ENCODE measurements at regions of chr2 and their contacts with region 1.

Region 1: DNA sequence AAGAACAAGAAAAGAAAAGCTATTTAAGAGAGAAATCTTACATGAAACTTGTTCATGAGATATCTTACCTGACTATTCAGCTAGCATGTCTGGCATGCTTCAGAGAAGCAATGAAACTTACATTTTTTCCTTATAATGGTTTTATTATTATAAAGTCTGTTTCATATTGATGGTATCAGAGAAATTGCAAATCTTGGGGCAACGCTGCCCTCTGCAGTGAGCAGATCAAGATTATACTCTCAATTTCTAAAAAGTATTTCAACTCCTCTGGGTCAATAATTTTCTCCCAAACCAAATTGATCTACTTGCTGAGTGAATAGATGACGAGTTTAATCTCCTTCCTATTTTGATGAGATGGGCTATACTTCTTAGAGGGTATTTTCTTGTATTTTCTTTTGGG is 235.6 kb downstream of the NUP35 start:
- DNase-seq: no peak
- H3K4me3 ChIP-seq: no peak overlapping the region
- H3K27ac ChIP-seq: no peak overlapping the region
- H3K4me1 ChIP-seq: no peaks in the 10 kb centered on the region
- H3K27me3 ChIP-seq: no peaks in the 10 kb centered on the region
- CTCF ChIP-seq: peak; percentile 13 to 45

Region 2: DNA sequence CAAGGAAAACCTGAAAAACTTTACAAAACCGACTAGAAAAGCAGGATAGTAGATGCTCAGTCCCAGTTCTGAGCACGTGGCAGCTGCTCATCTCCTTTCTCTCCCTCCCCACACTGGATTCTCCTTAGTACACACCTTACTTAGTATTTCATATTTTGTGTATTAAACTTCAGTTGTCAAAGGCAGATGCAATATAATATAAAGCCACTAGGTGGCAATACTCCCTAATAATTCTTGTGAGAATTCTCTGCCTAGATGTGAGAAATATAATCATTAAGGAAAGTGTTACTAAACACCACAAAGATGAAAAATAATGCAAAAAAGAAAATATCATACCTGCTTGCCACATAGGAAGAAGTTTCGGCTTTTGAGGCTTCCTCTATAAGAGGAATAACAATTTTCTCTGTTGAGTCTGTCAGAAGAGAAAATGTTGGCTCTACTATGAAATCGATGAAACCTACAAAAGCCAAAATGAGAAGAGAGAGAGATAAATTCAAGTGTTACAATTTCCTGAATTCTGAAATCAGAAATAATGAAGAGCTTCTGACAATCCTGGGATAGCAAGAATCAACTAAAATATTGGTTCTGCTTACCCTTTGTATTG is 1173.6 kb before region 1 on chr2:
- CTCF ChIA-PET with region 1: interaction called, 3 read pairs
- dilution Hi-C with region 1: no loop called
- in situ Hi-C with region 1: no loop called
- intact Hi-C with region 1: loop called (anchors 5 kb)
- DNase-seq: peak; percentile 17
- H3K4me3 ChIP-seq: no peak overlapping the region
- H3K27ac ChIP-seq: no peak overlapping the region
- H3K4me1 ChIP-seq: no peaks in the 10 kb centered on the region
- H3K27me3 ChIP-seq: peaks cover 3% of the 10 kb centered on the region
- CTCF ChIP-seq: peak; percentile 61 to 64

Region 3: GRCh38 chr2:182616471-182617393 is 743.1 kb before region 1 on chr2:
- CTCF ChIA-PET with region 1: no interaction called
- dilution Hi-C with region 1: no loop called
- in situ Hi-C with region 1: no loop called
- intact Hi-C with region 1: no loop called
- DNase-seq: no peak
- H3K4me3 ChIP-seq: no peak overlapping the region
- H3K27ac ChIP-seq: no peak overlapping the region
- H3K4me1 ChIP-seq: no peaks in the 10 kb centered on the region
- H3K27me3 ChIP-seq: no peaks in the 10 kb centered on the region
- CTCF ChIP-seq: no peak

Region 4: DNA sequence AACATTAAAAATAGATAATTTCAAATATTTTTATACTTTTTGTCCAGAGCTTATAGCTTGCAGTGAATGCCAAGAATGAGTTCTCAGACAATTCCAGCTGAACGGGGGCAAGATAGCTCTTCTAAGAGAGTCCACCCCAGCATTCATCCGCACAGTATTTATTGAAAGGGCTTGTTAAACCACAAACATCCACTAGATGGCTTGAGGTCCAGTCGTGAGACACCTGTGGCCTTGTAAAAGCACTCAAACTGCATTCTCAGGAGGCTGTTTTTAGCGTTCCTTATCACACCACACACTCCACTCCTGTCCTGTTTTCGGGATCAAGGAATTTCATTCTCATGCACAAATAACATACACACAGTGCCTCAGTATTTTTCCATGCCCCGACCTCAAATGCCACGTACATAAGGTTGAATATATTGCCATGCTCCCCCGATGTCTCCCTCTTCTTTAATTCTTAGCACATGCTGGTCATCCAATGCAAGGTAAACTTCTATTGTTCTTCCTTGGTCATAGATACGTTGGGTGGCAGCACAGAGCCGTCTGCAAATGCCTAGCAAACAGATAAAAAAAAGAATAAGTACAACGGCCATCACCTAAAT is 596.5 kb before region 1 on chr2:
- CTCF ChIA-PET with region 1: no interaction called
- dilution Hi-C with region 1: no loop called
- in situ Hi-C with region 1: no loop called
- intact Hi-C with region 1: loop called (anchors 5 kb)
- DNase-seq: peak; percentile 16
- H3K4me3 ChIP-seq: no peak overlapping the region
- H3K27ac ChIP-seq: no peak overlapping the region
- H3K4me1 ChIP-seq: no peaks in the 10 kb centered on the region
- H3K27me3 ChIP-seq: no peaks in the 10 kb centered on the region
- CTCF ChIP-seq: peak; percentile 41 to 73

Region 5: DNA sequence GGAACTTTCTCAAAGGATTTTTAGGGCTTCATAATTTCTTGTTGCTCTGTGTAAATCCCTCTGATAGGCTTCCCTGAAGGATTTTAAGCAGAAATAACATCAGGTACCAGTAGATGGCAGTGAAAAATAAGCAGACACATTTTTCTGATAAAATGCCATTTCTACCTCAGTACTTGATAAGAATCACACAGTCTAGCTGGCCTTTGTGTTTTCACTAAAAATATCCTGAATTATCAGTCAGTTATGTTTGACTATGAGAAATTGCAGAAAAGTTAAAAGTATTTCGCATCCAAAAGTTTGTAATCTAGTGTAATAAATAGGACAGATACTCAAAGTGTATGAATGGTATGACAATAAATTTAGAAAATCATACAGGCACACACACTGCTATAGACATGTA is 575.1 kb before region 1 on chr2:
- CTCF ChIA-PET with region 1: no interaction called
- dilution Hi-C with region 1: no loop called
- in situ Hi-C with region 1: loop called in 1 of 2 experiments (anchors 25 kb)
- intact Hi-C with region 1: no loop called
- DNase-seq: peak; percentile 9
- H3K4me3 ChIP-seq: no peak overlapping the region
- H3K27ac ChIP-seq: no peak overlapping the region
- H3K4me1 ChIP-seq: no peaks in the 10 kb centered on the region
- H3K27me3 ChIP-seq: no peaks in the 10 kb centered on the region
- CTCF ChIP-seq: peak; percentile 33 to 51

Region 6: DNA sequence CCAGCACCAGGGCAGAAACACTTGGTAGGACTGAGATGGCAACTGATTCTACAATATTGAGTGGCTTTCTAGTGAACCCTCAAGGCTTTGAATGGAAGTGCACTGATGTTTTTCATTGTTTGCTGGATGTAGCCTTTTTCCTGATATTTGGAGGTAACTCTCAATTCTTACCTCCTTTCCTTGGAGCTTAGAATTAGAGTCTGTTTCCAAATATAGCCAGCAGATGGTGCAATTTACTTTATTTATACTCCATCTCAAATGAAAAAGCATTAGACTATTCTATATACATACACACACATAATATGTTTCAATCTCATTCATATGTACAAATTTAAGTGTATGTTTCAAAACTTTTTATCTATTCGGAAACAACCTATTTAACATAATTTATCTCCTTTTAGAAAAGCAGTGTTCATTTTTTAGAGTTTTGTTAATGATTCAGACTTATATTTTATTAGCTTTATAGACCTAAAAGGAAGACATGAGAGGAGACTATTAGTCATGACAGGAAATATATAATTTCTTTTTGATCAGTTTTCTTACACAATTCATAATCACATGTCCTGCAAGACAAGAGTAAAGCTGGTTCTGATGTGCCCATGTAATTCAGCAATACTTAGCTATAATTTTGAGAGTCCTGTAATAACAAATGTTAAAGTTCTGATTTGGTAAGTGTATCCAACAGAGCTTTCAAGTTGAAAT is 110.8 kb before region 1 on chr2:
- CTCF ChIA-PET with region 1: interaction called, 10 read pairs
- dilution Hi-C with region 1: no loop called
- in situ Hi-C with region 1: no loop called
- intact Hi-C with region 1: loop called (anchors 1 kb)
- DNase-seq: peak; percentile 42
- H3K4me3 ChIP-seq: no peak overlapping the region
- H3K27ac ChIP-seq: peak overlapping the region; percentile 91
- H3K4me1 ChIP-seq: peaks cover 25% of the 10 kb centered on the region
- H3K27me3 ChIP-seq: no peaks in the 10 kb centered on the region
- CTCF ChIP-seq: peak; percentile 47 to 53

Region 7: GRCh38 chr2:183259921-183260320 is 99.9 kb before region 1 on chr2:
- CTCF ChIA-PET with region 1: no interaction called
- dilution Hi-C with region 1: no loop called
- in situ Hi-C with region 1: loop called in 1 of 2 experiments (anchors 5 kb)
- intact Hi-C with region 1: no loop called
- DNase-seq: no peak
- H3K4me3 ChIP-seq: no peak overlapping the region
- H3K27ac ChIP-seq: no peak overlapping the region
- H3K4me1 ChIP-seq: no peaks in the 10 kb centered on the region
- H3K27me3 ChIP-seq: no peaks in the 10 kb centered on the region
- CTCF ChIP-seq: no peak

Region 8: DNA sequence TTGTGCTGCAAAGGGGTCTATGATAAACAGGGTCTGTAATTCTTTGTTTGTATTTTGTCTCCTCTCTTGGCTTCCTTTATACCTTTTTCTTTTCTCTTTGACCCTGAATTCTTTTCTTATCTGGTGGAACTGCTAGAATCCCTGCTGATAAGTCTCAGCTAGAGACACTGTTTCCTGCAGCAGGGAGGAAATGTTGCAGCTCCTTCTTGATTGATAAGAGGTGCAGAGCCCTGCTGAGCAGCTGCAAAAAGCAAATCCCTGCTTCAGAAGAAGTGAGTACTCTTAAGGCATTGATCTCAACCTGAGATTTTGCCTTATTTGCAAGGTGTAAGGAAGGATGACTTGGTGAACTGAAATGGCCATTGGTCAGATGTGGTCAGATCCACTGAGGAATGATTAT is 67.8 kb before region 1 on chr2:
- CTCF ChIA-PET with region 1: no interaction called
- dilution Hi-C with region 1: no loop called
- in situ Hi-C with region 1: no loop called
- intact Hi-C with region 1: loop called (anchors 1 kb)
- DNase-seq: no peak
- H3K4me3 ChIP-seq: no peak overlapping the region
- H3K27ac ChIP-seq: no peak overlapping the region
- H3K4me1 ChIP-seq: peaks cover 18% of the 10 kb centered on the region
- H3K27me3 ChIP-seq: no peaks in the 10 kb centered on the region
- CTCF ChIP-seq: no peak

Region 9: GRCh38 chr2:183868707-183869106 is 508.8 kb after region 1 on chr2:
- CTCF ChIA-PET with region 1: no interaction called
- dilution Hi-C with region 1: no loop called
- in situ Hi-C with region 1: no loop called
- intact Hi-C with region 1: no loop called
- DNase-seq: peak; percentile 77
- H3K4me3 ChIP-seq: no peak overlapping the region
- H3K27ac ChIP-seq: no peak overlapping the region
- H3K4me1 ChIP-seq: peaks cover 12% of the 10 kb centered on the region
- H3K27me3 ChIP-seq: no peaks in the 10 kb centered on the region
- CTCF ChIP-seq: no peak